HCT116 (cell line): ENCODE measurements at regions of chr2 and their contacts with region 1.

Region 1: DNA sequence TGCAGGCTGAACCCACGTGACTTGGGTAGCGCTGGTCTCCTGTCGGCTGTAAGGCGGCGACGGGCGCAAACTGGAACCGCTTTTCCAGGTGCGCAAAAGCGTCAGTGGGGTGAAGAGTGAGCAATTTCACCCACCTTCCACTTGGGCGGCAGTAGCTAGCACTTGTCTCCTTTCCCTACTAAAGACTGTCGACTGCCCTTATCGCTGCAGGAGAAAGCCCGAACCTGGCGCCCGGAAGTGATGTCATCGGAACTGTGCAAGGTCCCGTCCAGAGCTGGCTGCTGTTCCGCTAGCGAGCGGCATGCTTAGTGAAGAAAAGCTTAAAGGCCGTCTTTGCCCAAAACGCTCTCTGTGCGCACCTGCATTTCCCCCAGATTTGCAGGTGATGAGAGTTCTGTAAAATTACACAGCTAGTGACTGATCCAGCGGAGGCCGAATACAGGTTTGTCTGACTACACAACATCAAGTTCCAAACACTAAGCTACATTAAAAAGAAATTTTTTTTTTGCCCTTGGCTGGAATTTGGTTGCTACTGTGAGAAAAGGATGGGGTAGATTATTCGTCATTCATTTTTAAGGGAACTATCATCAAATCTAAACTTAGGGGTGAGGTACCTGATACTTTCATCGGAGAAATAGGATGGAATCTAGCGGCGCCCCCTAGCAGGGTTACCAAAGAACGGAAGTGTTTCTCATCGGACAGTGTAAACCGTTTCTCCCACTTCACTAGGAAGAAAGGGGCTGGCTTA is at the start of gene OSGEPL1:
- DNase-seq: peak; percentile 96
- ATAC-seq: peak; percentile 96
- H3K4me3 ChIP-seq: peak within 1 kb of the TSS; percentile 63 to 73
- H3K27ac ChIP-seq: peak within 1 kb of the TSS; percentile 74
- H3K4me1 ChIP-seq: peaks cover 3 to 17% of the 10 kb centered on the region in 2 experiments; a peak in 3 of 4 replicates
- H3K27me3 ChIP-seq: no peaks in the 10 kb centered on the region
- CTCF ChIP-seq: peak; percentile 50 to 56 (median 55); a peak in 5 of 6 replicates
- POLR2A ChIP-seq: peak; percentile 77
- RAD21 ChIP-seq: peak; percentile 27; the same call in 1 of the 2 replicates
- total RNA-seq, gene OSGEPL1: 11.2 TPM

Region 2: DNA sequence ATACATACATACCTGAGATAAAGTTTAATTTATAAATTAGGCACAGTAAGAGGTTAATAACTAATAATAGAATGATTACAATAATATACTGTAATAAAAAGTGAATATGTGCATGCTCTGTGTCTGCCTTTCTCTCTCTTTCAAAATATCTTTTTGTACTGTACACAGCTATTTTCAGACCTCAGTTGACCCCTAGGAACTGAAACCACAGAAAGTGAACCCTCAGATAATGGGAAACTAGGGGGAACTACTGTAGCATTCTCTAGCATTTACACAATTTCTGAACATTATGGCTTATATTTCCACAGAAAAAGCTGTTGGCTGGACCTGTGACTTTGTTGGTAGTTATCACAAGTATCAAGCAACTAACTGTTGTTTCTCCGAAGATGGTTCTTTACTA is 295.6 kb before region 1 on chr2:
- CTCF ChIA-PET with region 1: no interaction called
- POLR2A ChIA-PET with region 1: no interaction called
- RAD21 ChIA-PET with region 1: no interaction called
- intact Hi-C with region 1: no loop called
- DNase-seq: no peak
- ATAC-seq: no peak
- H3K4me3 ChIP-seq: no peak overlapping the region
- H3K27ac ChIP-seq: no peak overlapping the region
- H3K4me1 ChIP-seq: no peaks in the 10 kb centered on the region
- H3K27me3 ChIP-seq: no peaks in the 10 kb centered on the region
- CTCF ChIP-seq: no peak
- POLR2A ChIP-seq: no peak
- RAD21 ChIP-seq: no peak

Region 3: DNA sequence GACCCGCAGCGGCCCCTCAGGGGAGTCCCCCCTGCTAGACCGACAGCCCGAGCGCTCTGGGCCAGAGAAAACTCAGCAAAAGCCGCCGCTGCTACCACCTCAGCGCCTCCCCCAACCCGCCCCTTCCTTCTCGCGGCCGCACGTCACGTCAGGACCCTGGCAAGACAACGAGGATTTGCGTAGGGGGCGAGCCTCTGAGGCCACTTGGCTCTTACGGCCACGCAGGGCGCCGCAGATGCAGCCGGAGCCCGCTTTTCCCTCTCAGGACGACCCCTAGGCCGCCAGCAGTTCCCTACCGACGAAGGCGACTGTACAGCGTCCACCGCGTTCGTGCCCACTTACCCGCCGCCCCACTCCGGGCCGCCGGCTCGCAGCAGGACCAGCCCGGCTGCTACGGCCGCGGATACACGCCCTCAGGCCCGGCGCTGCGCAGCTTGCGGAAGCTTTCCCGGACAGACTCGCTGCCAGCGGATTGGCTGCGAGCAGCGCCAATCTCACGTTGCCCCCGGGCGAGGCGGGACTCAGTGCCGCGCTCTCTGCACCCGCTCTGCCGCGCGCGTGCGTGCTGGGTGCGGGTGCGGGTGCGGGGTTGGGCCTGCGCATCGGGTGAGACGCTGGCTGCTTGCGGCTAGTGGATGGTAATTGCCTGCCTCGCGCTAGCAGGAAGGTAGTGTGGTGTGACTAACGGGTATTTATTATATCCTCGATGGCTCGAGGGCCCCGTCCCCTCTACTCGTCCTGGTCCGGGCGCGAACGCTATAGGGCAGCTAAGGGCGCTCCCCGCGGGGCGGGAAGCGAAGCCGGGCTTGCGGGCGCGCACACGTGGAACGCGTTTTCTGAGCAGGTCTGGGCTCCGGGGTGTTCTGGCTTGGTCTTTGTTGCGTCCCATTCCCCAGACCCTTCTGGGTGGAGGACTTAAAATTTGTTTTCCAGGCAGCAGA is 21.5 kb after region 1 on chr2 and contains the starts of genes ORMDL1 and PMS1:
- CTCF ChIA-PET with region 1: interaction called, 3 read pairs
- POLR2A ChIA-PET with region 1: interaction called, 7 read pairs
- RAD21 ChIA-PET with region 1: no interaction called
- intact Hi-C with region 1: loop called (anchors 1 kb)
- DNase-seq: peak; percentile 91
- ATAC-seq: peak; percentile 95
- H3K4me3 ChIP-seq: peak within 1 kb of the TSS; percentile 81 to 91
- H3K27ac ChIP-seq: peak within 1 kb of the TSS; percentile 80
- H3K4me1 ChIP-seq: peaks cover 5 to 16% of the 10 kb centered on the region in 2 experiments; a peak in 3 of 4 replicates
- H3K27me3 ChIP-seq: no peaks in the 10 kb centered on the region
- CTCF ChIP-seq: no peak
- POLR2A ChIP-seq: peak; percentile 75
- RAD21 ChIP-seq: no peak
- total RNA-seq, gene ORMDL1: 32.7 TPM
- total RNA-seq, gene PMS1: 53.2 TPM

Region 4: GRCh38 chr2:189848276-189848675 is 85.6 kb after region 1 on chr2:
- CTCF ChIA-PET with region 1: no interaction called
- POLR2A ChIA-PET with region 1: no interaction called
- RAD21 ChIA-PET with region 1: no interaction called
- intact Hi-C with region 1: no loop called
- DNase-seq: no peak
- ATAC-seq: no peak
- H3K4me3 ChIP-seq: no peak overlapping the region
- H3K27ac ChIP-seq: no peak overlapping the region
- H3K4me1 ChIP-seq: peaks cover 10 to 13% of the 10 kb centered on the region in 2 experiments; a peak in 3 of 4 replicates
- H3K27me3 ChIP-seq: no peaks in the 10 kb centered on the region
- CTCF ChIP-seq: no peak
- POLR2A ChIP-seq: no peak
- RAD21 ChIP-seq: no peak

Region 5: DNA sequence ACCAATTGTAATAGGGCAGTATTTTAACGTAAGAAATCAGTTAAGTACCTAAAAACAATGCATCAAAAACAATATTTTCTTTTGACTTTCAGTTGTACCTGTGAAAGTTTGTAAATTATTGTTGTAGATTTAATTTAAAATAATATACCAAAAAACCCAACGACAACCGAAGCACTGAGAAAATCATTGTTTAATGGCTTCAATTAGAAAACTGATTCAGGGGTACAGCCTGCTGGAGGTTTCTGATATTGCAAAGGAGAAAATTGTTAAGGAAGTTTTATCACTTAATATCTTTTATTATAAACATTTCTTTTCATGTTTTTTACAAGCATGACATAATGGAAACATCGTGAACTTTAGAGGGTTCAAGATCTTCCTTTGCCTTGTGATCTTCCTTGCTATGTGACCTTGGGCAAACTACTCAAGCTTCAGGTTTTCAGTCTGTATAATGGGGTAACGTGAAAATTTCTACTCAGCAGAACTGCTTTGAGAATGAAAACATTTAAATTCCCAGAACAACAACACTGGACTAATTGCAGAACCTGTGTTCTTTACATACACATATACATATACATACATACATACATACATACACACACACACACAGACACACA is 1041.6 kb after region 1 on chr2:
- CTCF ChIA-PET with region 1: no interaction called
- POLR2A ChIA-PET with region 1: no interaction called
- RAD21 ChIA-PET with region 1: no interaction called
- intact Hi-C with region 1: loop called (anchors 10 kb)
- DNase-seq: peak; percentile 16
- ATAC-seq: no peak; the same call in 1 of the 2 replicates
- H3K4me3 ChIP-seq: no peak overlapping the region
- H3K27ac ChIP-seq: no peak overlapping the region
- H3K4me1 ChIP-seq: no peaks in the 10 kb centered on the region
- H3K27me3 ChIP-seq: no peaks in the 10 kb centered on the region
- CTCF ChIP-seq: peak; percentile 35 to 58 (median 58); a peak in 5 of 6 replicates
- POLR2A ChIP-seq: no peak
- RAD21 ChIP-seq: peak; percentile 72